ENCODE measurements at regions of chr12 and their contacts with region 1.

Region 1: GRCh38 chr12:130026608-130027176 is 122.9 kb upstream of the TMEM132D start:
- H3K4me3 ChIP-seq: no peak overlapping the region
- H3K27ac ChIP-seq: no peak overlapping the region
- H3K4me1 ChIP-seq: no peaks in the 10 kb centered on the region
- CTCF ChIP-seq: no peak

Region 2: DNA sequence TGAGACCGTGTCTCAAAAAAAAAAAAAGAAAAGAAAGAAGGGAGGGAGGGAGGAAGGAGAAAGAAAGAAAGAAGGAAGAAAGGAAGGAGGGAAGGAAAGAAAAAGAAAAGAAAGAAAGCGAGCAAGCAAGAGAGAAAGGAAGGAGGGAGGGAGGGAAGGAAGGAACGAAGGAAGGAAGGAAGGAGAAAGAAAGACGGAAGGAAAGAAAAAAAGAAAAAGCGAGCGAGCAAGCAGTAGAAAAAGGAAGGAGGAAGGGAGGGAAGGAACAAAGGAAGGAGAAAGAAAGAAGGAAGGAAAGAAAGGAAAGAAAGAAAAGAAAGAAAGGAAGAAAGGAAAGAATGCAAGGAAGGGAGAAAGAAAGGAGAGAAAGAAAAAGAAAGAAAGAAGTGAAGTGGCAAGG is 669.5 kb before region 1 on chr12:
- CTCF ChIA-PET with region 1: no interaction called
- POLR2A ChIA-PET with region 1: no interaction called
- H3K4me3 ChIP-seq: no peak overlapping the region
- H3K27ac ChIP-seq: no peak overlapping the region
- H3K4me1 ChIP-seq: no peaks in the 10 kb centered on the region
- CTCF ChIP-seq: no peak

Region 3: DNA sequence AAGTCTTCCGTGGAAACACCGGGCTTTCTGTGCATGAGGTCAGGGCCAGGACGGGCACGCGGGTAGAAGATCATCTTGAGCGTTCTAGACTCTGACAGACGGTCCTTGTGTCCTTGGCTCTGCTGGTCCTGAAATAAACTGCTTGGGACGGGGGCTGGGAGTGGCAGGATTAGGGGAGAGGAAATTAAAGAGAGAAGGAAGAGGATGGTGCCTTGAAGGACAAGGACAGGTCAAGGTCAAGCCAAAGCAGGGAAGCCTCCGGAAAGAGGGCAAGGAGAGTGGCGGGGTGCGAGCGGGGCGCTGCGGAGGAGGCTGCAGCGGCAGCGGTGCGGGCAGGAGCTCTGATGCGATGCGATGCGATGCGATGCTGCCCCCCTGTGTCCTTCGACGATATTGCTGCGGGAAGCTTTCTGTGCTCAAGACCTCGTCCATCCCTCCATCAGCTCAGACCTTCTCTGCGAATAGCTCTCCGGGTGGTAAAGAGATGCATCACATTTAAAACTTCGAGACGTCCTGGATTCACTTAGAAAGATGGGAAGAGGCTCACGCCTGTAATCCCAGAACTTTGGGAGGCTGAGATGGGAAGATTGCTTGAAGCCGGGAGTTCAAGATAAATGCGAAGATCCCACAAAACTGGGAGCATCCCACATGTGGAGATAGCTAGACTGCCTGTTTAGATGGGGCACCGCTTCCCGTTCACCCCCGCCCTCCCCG is 12.8 kb before region 1 on chr12:
- CTCF ChIA-PET with region 1: interaction called, 20 read pairs
- POLR2A ChIA-PET with region 1: no interaction called
- H3K4me3 ChIP-seq: no peak overlapping the region
- H3K27ac ChIP-seq: no peak overlapping the region
- H3K4me1 ChIP-seq: no peaks in the 10 kb centered on the region
- CTCF ChIP-seq: peak; percentile 65

Region 4: GRCh38 chr12:130070126-130070611 is 43.5 kb after region 1 on chr12:
- CTCF ChIA-PET with region 1: no interaction called
- POLR2A ChIA-PET with region 1: no interaction called
- H3K4me3 ChIP-seq: no peak overlapping the region
- H3K27ac ChIP-seq: no peak overlapping the region
- H3K4me1 ChIP-seq: no peaks in the 10 kb centered on the region
- CTCF ChIP-seq: no peak

Region 5: DNA sequence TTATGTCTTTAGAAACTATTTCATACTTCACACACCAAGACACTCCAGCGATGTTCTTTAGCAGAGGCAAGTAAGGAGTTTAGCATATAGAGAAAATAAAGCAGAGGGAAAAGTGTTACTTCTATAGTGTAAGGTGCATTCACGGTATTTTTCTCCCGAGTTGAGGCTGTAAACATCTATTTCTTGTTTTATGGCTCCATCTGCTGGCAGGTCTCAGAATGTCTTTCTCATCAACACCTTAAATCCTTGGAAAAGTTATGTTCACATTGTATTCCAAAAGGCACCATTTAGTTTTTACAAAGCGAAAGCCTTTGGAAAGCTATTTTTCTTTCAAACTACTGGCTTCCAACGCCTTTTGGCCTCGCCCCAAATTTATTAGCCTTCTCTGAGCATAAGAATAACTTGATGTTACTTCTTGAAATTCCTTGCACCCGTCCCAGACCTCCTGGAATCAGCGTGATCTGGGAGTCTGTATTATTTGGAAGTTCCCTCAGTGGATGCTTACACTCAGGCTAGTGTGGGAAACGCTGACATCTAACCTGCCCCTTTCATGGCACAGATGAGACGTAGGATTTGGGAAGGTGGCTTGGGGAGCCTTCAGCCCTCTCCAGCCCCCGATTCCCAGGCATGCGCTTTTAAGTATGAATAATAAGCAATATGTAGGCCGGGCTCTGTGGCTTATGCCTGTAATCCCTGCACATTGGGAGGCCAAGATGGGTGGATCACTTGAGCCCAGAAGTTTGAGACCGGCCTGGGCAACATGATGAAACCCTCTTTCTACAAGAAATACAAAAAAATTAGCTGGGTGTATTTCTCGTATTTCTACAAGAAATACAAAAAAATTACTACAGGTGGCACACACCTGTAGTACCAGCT is 309.1 kb after region 1 on chr12:
- CTCF ChIA-PET with region 1: interaction called, 14 read pairs
- POLR2A ChIA-PET with region 1: no interaction called
- H3K4me3 ChIP-seq: no peak overlapping the region
- H3K27ac ChIP-seq: no peak overlapping the region
- H3K4me1 ChIP-seq: no peaks in the 10 kb centered on the region
- CTCF ChIP-seq: 0 out of 2 replicates have a peak, but pooled peaks have one; percentile 11